ENCODE measurements at regions of chr14 and their contacts with region 1.

Region 1: DNA sequence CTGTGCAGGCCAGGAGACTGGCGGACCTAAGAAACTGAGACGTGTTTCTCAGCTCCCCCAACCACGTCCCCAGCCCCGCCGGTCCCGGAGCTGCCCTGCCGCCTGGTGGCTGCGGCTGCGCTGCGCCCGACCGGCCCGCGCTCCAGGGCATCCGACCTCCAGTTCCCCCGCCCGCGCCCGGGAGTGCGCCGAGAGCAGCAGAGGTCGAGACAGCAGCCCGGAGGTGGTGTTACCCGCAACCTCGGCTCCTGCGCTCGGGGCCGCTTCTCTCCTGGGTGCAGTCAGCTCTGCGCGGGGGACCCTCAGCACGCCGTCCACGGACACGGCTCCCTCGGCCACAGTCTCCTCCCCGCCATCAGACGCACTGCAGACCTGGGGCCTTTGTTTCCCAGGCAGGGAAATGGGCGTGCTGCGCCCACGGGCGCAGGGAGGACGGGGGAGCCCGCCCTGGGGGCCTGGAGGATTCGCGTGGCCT is 21.6 kb upstream of the GPR132 start:
- DNase-seq: peak; percentile 74 to 88 (median 84)
- ATAC-seq: peak; percentile 92
- H3K4me3 ChIP-seq: peak overlapping the region; percentile 63
- H3K4me3 Mint-ChIP-seq: peak overlapping the region; percentile 64 to 83 (median 78)
- H3K27ac ChIP-seq: peak overlapping the region; percentile 55
- H3K27ac Mint-ChIP-seq: peak overlapping the region in 8 of 9 donors; percentile 3 to 84 (median 55)
- H3K4me1 ChIP-seq: peaks cover 4 to 7% of the 10 kb centered on the region in 2 donors
- H3K4me1 Mint-ChIP-seq: peaks cover 8 to 22% (median 13%) of the 10 kb centered on the region in 7 donors
- H3K27me3 ChIP-seq: no peaks in the 10 kb centered on the region
- H3K27me3 Mint-ChIP-seq: peaks cover 0 to 27% (median 0%) of the 10 kb centered on the region in 5 donors

Region 2: GRCh38 chr14:105020815-105021655 is 65.8 kb before region 1 on chr14 and contains the start of gene CDCA4:
- CTCF ChIA-PET with region 1: interaction called, 7 read pairs
- POLR2A ChIA-PET with region 1: interaction called, 4 read pairs
- intact Hi-C with region 1: loop called (anchors 1 to 2 kb)
- DNase-seq: peak; percentile 93 to 98 (median 97)
- ATAC-seq: peak; percentile 91
- H3K4me3 ChIP-seq: peak within 1 kb of the TSS; percentile 97
- H3K4me3 Mint-ChIP-seq: peak within 1 kb of the TSS; percentile 88 to 99 (median 92)
- H3K27ac ChIP-seq: peak within 1 kb of the TSS; percentile 94
- H3K27ac Mint-ChIP-seq: peak within 1 kb of the TSS; percentile 81 to 97 (median 92)
- H3K4me1 ChIP-seq: peaks cover 25 to 54% of the 10 kb centered on the region in 2 donors
- H3K4me1 Mint-ChIP-seq: peaks cover 38 to 62% (median 41%) of the 10 kb centered on the region in 7 donors
- H3K27me3 ChIP-seq: no peaks in the 10 kb centered on the region
- H3K27me3 Mint-ChIP-seq: no peaks in the 10 kb centered on the region
- total RNA-seq, gene CDCA4: 12.7 to 47.8 (median 14.0) TPM

Region 3: GRCh38 chr14:105065280-105066228 is 21.3 kb before region 1 on chr14 and contains the start of gene GPR132:
- CTCF ChIA-PET with region 1: interaction called, 39 read pairs
- POLR2A ChIA-PET with region 1: interaction called, 50 read pairs
- intact Hi-C with region 1: loop called (anchors 1 kb)
- DNase-seq: peak; percentile 73 to 99 (median 96)
- ATAC-seq: peak; percentile 93
- H3K4me3 ChIP-seq: peak within 1 kb of the TSS; percentile 97
- H3K4me3 Mint-ChIP-seq: peak within 1 kb of the TSS; percentile 82 to 96 (median 90)
- H3K27ac ChIP-seq: peak within 1 kb of the TSS; percentile 96
- H3K27ac Mint-ChIP-seq: peak within 1 kb of the TSS; percentile 93 to 99 (median 98)
- H3K4me1 ChIP-seq: peaks cover 66 to 80% of the 10 kb centered on the region in 2 donors
- H3K4me1 Mint-ChIP-seq: peaks cover 36 to 85% (median 58%) of the 10 kb centered on the region in 7 donors
- H3K27me3 ChIP-seq: no peaks in the 10 kb centered on the region
- H3K27me3 Mint-ChIP-seq: no peaks in the 10 kb centered on the region
- total RNA-seq, gene GPR132: 37.8 to 58.7 (median 45.2) TPM

Region 4: GRCh38 chr14:105180592-105181548 is 94.0 kb after region 1 on chr14 and contains the start of gene NUDT14:
- CTCF ChIA-PET with region 1: no interaction called
- POLR2A ChIA-PET with region 1: interaction called, 3 read pairs
- intact Hi-C with region 1: loop called in 1 of 2 experiments (anchors 5 kb)
- DNase-seq: peak; percentile 69 to 88 (median 82)
- ATAC-seq: peak; percentile 94
- H3K4me3 ChIP-seq: peak within 1 kb of the TSS; percentile 52
- H3K4me3 Mint-ChIP-seq: peak within 1 kb of the TSS; percentile 68 to 86 (median 77)
- H3K27ac ChIP-seq: peak within 1 kb of the TSS; percentile 53
- H3K27ac Mint-ChIP-seq: peak within 1 kb of the TSS in 7 of 9 donors; percentile 10 to 76 (median 64)
- H3K4me1 ChIP-seq: peaks cover 4 to 12% of the 10 kb centered on the region in 2 donors
- H3K4me1 Mint-ChIP-seq: peaks cover 0 to 23% (median 15%) of the 10 kb centered on the region in 7 donors
- H3K27me3 ChIP-seq: no peaks in the 10 kb centered on the region
- H3K27me3 Mint-ChIP-seq: peaks cover 0 to 4% (median 0%) of the 10 kb centered on the region in 5 donors
- total RNA-seq, gene NUDT14: 17.3 to 29.6 (median 20.6) TPM

Region 5: DNA sequence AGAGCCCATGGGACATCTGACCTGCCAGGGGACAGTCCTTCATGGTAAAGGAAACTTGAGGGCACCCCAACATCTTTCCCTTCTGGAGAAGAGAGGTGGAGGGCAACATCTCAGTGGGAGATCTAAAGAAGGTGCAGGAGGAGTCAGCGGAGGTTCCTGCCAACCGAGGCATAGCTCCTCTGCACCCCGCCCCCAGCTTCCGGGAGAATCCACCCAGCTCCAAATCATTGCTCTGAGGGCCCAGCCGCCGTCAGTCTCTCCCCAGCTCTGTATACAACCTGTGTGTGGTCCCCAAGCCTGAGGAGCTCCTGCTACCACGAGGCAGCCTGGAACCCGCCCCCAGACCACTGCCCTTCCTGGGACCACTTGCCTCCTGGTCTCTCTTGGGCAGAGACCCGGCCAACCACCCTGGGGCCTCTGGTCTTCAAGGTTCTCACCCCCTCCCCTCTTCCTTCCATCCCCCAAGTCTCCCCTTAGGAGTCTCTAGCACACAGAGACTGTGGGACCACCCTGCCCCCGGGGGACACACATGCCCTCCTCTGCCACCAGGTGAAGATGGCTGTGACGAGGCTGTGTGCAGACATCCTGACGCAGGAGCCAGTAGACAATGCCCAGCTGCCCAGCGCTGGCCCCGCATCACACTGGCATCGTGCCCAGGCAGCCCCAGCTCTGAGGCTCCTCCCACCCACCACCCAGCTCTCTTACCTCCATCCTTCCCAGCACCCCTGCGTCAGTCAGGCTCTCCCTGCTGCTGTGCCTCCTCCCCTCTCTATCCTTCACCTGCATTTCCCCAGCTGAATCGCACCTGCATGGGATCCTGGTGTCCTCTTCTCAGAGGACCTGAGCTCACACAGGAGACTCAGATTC is 107.3 kb after region 1 on chr14:
- CTCF ChIA-PET with region 1: no interaction called
- POLR2A ChIA-PET with region 1: no interaction called
- intact Hi-C with region 1: no loop called
- DNase-seq: peak in 3 of 9 donors; percentile 22 to 50 (median 28)
- ATAC-seq: peak; percentile 43
- H3K4me3 ChIP-seq: no peak overlapping the region
- H3K4me3 Mint-ChIP-seq: peak overlapping the region; percentile 39 to 84 (median 60)
- H3K27ac ChIP-seq: no peak overlapping the region
- H3K27ac Mint-ChIP-seq: peak overlapping the region in 4 of 9 donors; percentile 1 to 78 (median 52)
- H3K4me1 ChIP-seq: peaks cover 4 to 48% of the 10 kb centered on the region in 2 donors
- H3K4me1 Mint-ChIP-seq: peaks cover 16 to 33% (median 23%) of the 10 kb centered on the region in 7 donors
- H3K27me3 ChIP-seq: peaks cover 6% of the 10 kb centered on the region in 2 donors
- H3K27me3 Mint-ChIP-seq: peaks cover 13 to 36% (median 30%) of the 10 kb centered on the region in 5 donors

Region 6: DNA sequence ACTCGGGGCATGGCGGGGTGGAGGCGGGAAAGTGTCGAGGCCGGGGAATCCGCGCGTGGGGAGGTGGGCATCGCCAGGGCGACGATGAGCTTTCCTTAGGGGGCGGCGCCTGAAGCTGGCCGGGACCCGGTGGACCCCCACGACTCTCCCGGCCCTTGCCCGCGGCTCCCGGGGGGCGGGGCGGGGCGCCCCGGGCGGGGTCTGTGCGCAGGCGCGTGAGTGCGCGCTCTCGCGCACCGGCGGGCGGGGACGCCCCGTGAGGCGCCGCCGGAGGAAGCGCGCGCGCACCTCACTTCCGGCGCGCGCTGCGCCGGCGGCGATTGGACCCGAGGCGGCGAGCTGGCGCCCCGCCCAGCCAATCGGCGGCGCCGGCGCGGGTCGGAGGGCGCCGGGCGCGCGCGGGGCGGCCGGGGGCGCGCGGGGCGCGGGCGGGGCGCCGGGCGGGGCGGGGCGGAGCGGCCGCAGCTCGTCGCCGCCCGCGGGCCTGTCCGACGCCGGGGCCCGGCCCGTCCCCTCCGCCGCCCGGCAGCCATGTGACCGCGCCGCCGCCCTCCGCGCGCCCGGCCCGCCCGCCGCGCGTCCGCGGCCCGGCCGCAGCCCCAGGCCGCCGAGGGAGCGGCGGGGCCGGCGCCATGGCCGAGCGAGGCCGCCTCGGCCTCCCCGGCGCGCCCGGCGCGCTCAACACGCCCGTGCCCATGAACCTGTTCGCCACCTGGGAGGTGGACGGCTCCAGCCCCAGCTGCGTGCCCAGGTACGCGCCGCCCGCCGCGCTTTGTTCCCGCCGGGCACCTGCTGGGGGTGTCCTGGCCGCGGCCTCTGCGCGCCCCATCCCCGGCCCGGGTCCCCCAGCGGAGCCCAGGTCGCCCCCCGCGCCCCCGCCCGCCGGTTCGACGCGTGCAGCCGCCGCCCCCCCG is 227.7 kb after region 1 on chr14 and contains the start of gene PACS2:
- CTCF ChIA-PET with region 1: interaction called, 4 read pairs
- POLR2A ChIA-PET with region 1: no interaction called
- intact Hi-C with region 1: loop called in 1 of 2 experiments (anchors 1 kb)
- DNase-seq: peak; percentile 64 to 90 (median 86)
- ATAC-seq: peak; percentile 89
- H3K4me3 ChIP-seq: peak within 1 kb of the TSS; percentile 57
- H3K4me3 Mint-ChIP-seq: peak within 1 kb of the TSS; percentile 80 to 98 (median 89)
- H3K27ac ChIP-seq: peak within 1 kb of the TSS; percentile 68
- H3K27ac Mint-ChIP-seq: peak within 1 kb of the TSS; percentile 74 to 95 (median 89)
- H3K4me1 ChIP-seq: peaks cover 13 to 21% of the 10 kb centered on the region in 2 donors
- H3K4me1 Mint-ChIP-seq: peaks cover 9 to 35% (median 23%) of the 10 kb centered on the region in 7 donors
- H3K27me3 ChIP-seq: no peaks in the 10 kb centered on the region
- H3K27me3 Mint-ChIP-seq: peaks cover 0 to 9% (median 0%) of the 10 kb centered on the region in 5 donors
- total RNA-seq, gene PACS2: 33.9 to 75.4 (median 72.3) TPM

Measured in naive thymus-derived CD4-positive, alpha-beta T cell (primary cell).